ENCODE measurements at regions of chr9 and their contacts with region 1.

Region 1: GRCh38 chr9:91261417-91261816 is 100.3 kb downstream of the AUH start:
- DNase-seq: no peak
- ATAC-seq: no peak
- H3K4me3 ChIP-seq: no peak overlapping the region
- H3K27ac ChIP-seq: no peak overlapping the region
- H3K4me1 ChIP-seq: peaks cover 2 to 3% of the 10 kb centered on the region in 2 donors
- H3K27me3 ChIP-seq: no peaks in the 10 kb centered on the region
- CTCF ChIP-seq: no peak
- POLR2A ChIP-seq: no peak

Region 2: DNA sequence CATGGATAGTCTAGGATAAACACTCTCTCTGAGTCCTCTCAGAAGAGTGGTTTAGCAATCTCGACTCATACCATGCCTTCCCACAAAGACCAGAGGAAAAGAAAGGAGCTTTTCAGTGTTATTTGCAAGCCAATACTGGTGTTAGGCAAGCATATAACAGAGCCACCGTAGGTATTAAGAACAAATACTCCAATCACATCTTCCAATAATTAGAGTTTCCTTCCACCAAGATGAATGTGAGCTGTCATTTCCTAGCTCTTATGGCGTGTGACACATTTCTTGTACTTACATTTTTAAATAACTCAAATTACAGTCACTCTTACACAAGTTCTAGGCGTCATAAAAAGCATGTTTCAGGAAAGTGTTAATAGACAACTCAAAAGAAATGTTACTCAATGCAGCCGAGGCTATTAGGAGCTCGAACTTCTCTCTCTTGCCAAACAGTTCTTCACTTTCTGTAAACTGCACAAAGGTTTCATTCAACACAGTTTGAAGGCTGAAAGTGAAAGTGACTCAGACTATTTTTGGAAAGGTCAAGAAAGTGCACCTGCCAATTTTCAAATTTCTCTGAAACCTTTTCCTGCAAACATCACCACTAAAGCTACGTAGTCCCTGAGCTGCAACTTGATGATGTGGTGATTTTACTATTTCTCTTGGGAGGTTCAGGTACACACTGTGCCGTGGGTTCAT is 53.5 kb before region 1 on chr9:
- in situ Hi-C with region 1: no loop called
- intact Hi-C with region 1: loop called (anchors 10 kb)
- DNase-seq: no peak
- ATAC-seq: peak; percentile 61 to 84
- H3K4me3 ChIP-seq: peak overlapping the region in 3 of 4 donors; percentile 1 to 36 (median 1)
- H3K27ac ChIP-seq: peak overlapping the region; percentile 63 to 81 (median 74)
- H3K4me1 ChIP-seq: peaks cover 16 to 18% of the 10 kb centered on the region in 2 donors
- H3K27me3 ChIP-seq: no peaks in the 10 kb centered on the region
- CTCF ChIP-seq: no peak
- POLR2A ChIP-seq: peak in 1 of 2 donors; percentile 6

Region 3: GRCh38 chr9:91241909-91242308 is 19.5 kb before region 1 on chr9:
- in situ Hi-C with region 1: no loop called
- intact Hi-C with region 1: no loop called
- DNase-seq: no peak
- ATAC-seq: no peak
- H3K4me3 ChIP-seq: no peak overlapping the region
- H3K27ac ChIP-seq: no peak overlapping the region
- H3K4me1 ChIP-seq: peaks cover 6 to 31% of the 10 kb centered on the region in 2 donors
- H3K27me3 ChIP-seq: no peaks in the 10 kb centered on the region
- CTCF ChIP-seq: no peak
- POLR2A ChIP-seq: no peak

Measured in gastrocnemius medialis (tissue), 4 donors.